GM18951 (cell line): ENCODE measurements at regions of chr9 and their contacts with region 1.

Region 1: GRCh38 chr9:101307051-101307450 is 77.8 kb downstream of the BAAT start:
- POLR2A ChIP-seq: no peak

Region 2: GRCh38 chr9:100700689-100701318 is 606.2 kb before region 1 on chr9:
- in situ Hi-C with region 1: loop called (anchors 10 kb)
- POLR2A ChIP-seq: no peak

Region 3: GRCh38 chr9:100911273-100911672 is 395.8 kb before region 1 on chr9:
- in situ Hi-C with region 1: no loop called
- POLR2A ChIP-seq: no peak